CD8-positive, alpha-beta T cell (primary cell): ENCODE measurements at regions of chr7 and their contacts with region 1.

Region 1: GRCh38 chr7:68994841-68995240 is 603.4 kb upstream of the AUTS2 start:
- DNase-seq: no peak
- ATAC-seq: no peak
- H3K4me3 ChIP-seq: no peak overlapping the region
- H3K4me3 Mint-ChIP-seq: no peak overlapping the region
- H3K27ac ChIP-seq: no peak overlapping the region
- H3K27ac Mint-ChIP-seq: no peak overlapping the region
- H3K4me1 ChIP-seq: no peaks in the 10 kb centered on the region
- H3K4me1 Mint-ChIP-seq: no peaks in the 10 kb centered on the region
- H3K27me3 ChIP-seq: no peaks in the 10 kb centered on the region
- H3K27me3 Mint-ChIP-seq: no peaks in the 10 kb centered on the region
- CTCF ChIP-seq: no peak

Region 2: DNA sequence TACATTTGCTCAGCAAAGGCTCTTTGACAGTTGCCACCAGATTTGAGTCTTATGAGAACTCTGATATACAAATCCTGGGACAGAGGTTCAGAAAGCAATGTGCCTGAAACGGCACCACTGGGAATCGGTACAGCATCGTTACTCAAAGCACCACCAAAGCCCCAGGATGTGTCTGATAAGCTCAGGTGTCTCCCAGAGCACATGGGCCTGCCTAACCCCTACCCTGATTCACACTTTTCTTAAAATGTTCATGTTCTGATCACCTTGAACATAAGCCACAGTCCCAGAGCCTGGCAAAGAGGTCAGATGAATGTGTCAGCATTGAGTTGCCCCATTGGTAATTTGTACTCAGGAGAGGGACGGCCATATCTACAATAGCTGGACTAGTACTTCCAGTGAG is 57.6 kb after region 1 on chr7:
- CTCF ChIA-PET with region 1: no interaction called
- POLR2A ChIA-PET with region 1: no interaction called
- intact Hi-C with region 1: loop called in 1 of 2 experiments (anchors 10 kb)
- DNase-seq: no peak
- ATAC-seq: no peak
- H3K4me3 ChIP-seq: no peak overlapping the region
- H3K4me3 Mint-ChIP-seq: no peak overlapping the region
- H3K27ac ChIP-seq: no peak overlapping the region
- H3K27ac Mint-ChIP-seq: no peak overlapping the region
- H3K4me1 ChIP-seq: no peaks in the 10 kb centered on the region
- H3K4me1 Mint-ChIP-seq: no peaks in the 10 kb centered on the region
- H3K27me3 ChIP-seq: no peaks in the 10 kb centered on the region
- H3K27me3 Mint-ChIP-seq: no peaks in the 10 kb centered on the region
- CTCF ChIP-seq: no peak